ENCODE measurements at regions of chr7 and their contacts with region 1.

Region 1: DNA sequence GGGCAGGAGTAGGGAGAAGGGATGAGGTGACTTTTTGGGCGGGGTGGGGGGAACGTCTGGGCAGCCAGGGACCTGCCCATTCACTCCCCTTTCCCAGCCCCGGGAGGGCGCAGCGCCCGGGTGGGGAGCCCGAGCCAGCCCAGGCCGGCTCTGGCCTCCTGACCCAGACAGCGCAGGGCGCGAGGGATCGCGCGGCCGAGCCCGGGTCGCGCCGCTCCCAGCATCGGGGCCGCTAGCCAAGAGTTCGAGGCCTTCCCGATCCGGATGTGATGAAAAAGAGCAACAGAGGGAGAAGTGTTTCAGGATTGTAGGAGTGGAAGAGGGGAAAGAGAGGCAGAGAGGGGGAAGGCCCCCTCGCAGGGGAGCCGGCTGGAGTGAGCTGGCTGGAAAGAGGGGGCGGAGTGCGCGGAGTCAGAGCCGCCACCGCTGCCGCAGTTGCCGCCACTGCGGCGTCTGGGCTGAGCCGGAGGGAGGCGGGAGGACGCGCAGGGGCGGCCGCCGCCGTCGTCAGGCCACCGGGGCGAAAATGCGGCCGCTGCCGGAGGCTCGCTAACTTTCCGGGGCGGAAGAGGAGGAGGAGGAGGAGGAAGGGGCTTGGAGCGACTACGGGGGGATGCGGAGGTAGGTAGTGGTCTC is at the start of gene MDFIC:
- DNase-seq: peak; percentile 56
- H3K4me3 Mint-ChIP-seq: peak within 1 kb of the TSS; percentile 96
- H3K27ac Mint-ChIP-seq: peak within 1 kb of the TSS; percentile 97
- H3K4me1 Mint-ChIP-seq: peaks cover 63% of the 10 kb centered on the region
- H3K27me3 Mint-ChIP-seq: no peaks in the 10 kb centered on the region
- total RNA-seq, gene MDFIC: 114 and 136 TPM in 2 replicates

Region 2: DNA sequence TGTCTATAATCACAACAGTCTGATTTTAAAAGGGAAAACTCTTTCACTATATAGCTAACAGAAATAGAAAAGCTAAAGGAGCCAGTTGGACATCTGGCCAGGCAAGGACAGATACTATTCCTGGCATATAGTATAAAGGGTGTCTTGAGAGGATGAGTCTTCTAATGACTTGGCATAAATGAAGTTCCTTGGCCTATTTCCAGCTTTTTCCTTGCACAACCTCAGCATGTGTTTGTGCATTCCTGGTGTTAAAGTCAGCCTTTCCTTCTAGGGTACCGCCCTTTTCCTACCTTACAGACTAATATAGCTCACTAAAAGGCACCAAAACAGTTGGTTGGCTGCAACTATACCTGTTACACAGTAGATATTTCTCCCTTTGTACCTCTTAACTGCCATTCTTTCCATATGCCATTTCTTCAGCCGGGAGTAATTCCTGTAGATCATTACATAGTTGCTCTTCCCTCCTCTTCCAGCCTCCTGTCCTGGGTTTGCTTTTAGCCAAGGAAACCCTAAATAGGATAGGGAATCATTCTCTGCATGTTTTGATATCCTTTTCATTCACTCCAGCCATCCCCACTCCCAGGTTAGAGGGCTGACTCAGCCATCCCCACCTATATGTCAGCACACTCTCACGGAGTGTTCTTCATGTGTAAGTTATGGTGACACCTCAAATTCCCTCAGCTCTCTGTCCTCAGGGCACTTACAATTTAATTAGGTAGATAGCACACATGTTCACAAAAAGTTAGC is 102.3 kb before region 1 on chr7:
- intact Hi-C with region 1: no loop called
- DNase-seq: no peak
- H3K4me3 Mint-ChIP-seq: no peak overlapping the region
- H3K27ac Mint-ChIP-seq: no peak overlapping the region
- H3K4me1 Mint-ChIP-seq: peaks cover 11% of the 10 kb centered on the region
- H3K27me3 Mint-ChIP-seq: no peaks in the 10 kb centered on the region

Region 3: DNA sequence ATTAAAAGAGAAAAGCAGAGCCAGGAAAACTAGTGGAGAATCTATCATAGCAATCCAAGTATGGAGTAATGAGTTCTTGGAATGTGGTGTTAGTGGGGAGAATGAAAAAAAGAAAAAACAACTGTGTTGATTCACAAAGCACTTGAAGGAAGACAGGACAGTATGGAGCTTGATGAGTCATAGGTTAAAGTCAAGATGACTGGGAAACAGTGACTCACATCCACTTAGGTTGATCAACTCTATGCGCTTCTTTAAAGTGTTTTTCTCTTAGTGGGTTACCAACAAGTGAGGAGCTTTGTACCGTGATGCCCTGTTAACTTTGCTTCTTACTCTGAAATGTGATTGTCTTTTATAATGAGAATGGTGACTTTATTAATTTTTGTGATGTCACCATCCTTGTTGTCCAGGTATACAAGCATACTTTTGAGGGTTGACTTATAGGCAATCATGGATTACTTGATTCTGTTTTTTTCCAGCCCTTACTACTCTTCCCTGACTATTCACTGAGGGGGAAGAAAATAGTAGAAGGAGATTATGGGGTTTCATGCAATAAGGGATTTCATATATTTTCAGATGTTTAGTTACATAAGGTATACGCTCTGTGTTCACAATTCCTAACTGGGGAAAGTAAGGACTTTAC is 32.4 kb before region 1 on chr7:
- intact Hi-C with region 1: loop called (anchors 1 kb)
- DNase-seq: peak; percentile 6
- H3K4me3 Mint-ChIP-seq: peak overlapping the region; percentile 15
- H3K27ac Mint-ChIP-seq: peak overlapping the region; percentile 89
- H3K4me1 Mint-ChIP-seq: peaks cover 55% of the 10 kb centered on the region
- H3K27me3 Mint-ChIP-seq: no peaks in the 10 kb centered on the region